T-cell (primary cell): ENCODE measurements at regions of chr12 and their contacts with region 1.

Region 1: GRCh38 chr12:122215771-122216170 is 10.1 kb downstream of the DIABLO start:
- DNase-seq: no peak
- ATAC-seq: no peak
- H3K4me3 ChIP-seq: no peak overlapping the region
- H3K4me3 Mint-ChIP-seq: no peak overlapping the region
- H3K27ac ChIP-seq: no peak overlapping the region
- H3K27ac Mint-ChIP-seq: no peak overlapping the region
- H3K4me1 ChIP-seq: no peaks in the 10 kb centered on the region
- H3K4me1 Mint-ChIP-seq: peaks cover 3 to 6% (median 5%) of the 10 kb centered on the region in 3 donors
- H3K27me3 ChIP-seq: no peaks in the 10 kb centered on the region
- H3K27me3 Mint-ChIP-seq: no peaks in the 10 kb centered on the region

Region 2: DNA sequence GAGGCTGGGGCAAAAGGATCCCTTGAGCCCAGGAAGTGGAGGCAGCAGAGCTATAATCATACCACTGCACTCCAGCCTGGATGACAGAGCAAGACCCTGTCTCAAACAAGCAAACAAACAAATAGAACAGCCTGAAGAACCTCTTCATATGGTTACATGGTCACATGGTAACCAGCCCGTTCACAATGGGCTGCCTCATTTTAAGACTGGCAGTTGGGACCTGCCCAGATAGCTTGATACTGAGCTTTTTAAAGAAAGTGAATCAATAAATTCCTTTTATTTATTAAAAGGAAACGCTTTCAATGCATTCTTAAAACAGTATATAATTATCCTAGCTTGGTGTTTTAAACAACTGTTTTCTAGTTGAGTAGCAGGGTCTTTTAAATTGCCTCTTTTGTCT is 126.7 kb before region 1 on chr12:
- CTCF ChIA-PET with region 1: no interaction called
- POLR2A ChIA-PET with region 1: interaction called in 1 of 2 experiments, 11 read pairs
- DNase-seq: no peak
- ATAC-seq: no peak
- H3K4me3 ChIP-seq: no peak overlapping the region
- H3K4me3 Mint-ChIP-seq: peak overlapping the region in 1 of 3 donors; percentile 86
- H3K27ac ChIP-seq: no peak overlapping the region
- H3K27ac Mint-ChIP-seq: peak overlapping the region; percentile 66 to 94
- H3K4me1 ChIP-seq: peaks cover 71 to 84% of the 10 kb centered on the region in 2 experiments
- H3K4me1 Mint-ChIP-seq: peaks cover 6 to 44% (median 41%) of the 10 kb centered on the region in 3 donors
- H3K27me3 ChIP-seq: no peaks in the 10 kb centered on the region
- H3K27me3 Mint-ChIP-seq: no peaks in the 10 kb centered on the region

Region 3: DNA sequence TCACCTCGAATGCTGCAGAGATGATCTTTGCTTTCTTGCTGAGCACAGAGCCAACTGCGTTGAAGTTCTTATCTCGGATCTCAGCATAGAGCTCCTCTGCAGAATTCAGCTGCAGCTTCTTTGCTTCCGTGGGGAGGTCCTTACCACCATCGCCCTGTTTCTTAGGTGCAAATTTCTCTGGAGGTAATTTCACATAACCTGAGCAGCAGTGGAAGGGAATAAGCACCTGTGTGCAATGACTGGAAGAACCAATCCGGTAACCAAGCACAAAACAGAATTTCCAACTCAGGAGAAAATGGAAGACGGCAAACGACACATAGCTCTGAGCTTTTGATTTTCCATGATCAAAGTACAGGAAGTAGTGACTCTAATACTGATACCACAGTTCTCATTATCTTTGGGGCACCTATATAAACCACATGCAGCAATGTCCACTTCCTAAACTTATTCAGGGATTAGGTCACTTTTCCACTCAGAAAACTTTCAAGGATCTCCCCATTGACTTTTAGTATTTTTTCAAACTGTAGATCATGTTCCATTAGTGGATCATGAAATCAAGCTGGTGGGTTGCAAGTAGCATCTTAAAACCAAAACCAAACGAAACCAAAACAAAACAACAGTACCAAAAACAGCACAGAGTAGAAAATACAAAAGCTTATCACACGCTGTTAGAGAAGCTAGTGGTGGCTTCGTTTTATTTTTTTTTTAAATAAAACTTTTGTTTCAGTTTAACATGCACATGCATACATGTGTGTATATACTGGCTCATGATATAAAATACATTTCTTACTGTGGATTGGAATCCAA is 29.0 kb after region 1 on chr12:
- CTCF ChIA-PET with region 1: interaction called in 1 of 2 experiments, 3 read pairs
- POLR2A ChIA-PET with region 1: interaction called in 1 of 2 experiments, 13 read pairs
- DNase-seq: peak in 16 of 35 experiments; percentile 1 to 60 (median 14)
- ATAC-seq: peak; percentile 79 to 84 (median 83)
- H3K4me3 ChIP-seq: peak overlapping the region in 1 of 2 donors; percentile 49
- H3K4me3 Mint-ChIP-seq: peak overlapping the region; percentile 76 to 85 (median 82)
- H3K27ac ChIP-seq: peak overlapping the region; percentile 72
- H3K27ac Mint-ChIP-seq: peak overlapping the region; percentile 91 to 93
- H3K4me1 ChIP-seq: peaks cover 5 to 26% of the 10 kb centered on the region in 2 experiments
- H3K4me1 Mint-ChIP-seq: peaks cover 17 to 41% (median 34%) of the 10 kb centered on the region in 3 donors
- H3K27me3 ChIP-seq: no peaks in the 10 kb centered on the region
- H3K27me3 Mint-ChIP-seq: no peaks in the 10 kb centered on the region

Region 4: DNA sequence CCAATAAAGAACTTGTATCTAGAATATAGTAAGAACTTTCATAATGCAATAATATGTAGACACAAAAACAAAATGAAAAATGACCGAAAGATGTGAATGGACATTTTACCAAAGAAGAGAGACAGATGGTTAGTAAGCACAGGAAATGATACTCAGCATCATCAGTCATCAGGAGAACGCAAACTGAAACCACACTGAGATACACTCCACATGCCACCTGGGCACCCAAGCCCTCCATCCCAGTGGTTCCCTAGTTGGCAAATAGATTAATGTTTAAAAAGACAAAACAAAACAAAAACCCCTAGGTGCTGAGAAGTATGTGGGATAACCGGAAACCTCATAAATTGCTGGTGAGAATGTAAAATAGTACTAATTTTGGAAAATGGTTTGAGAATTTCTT is 77.3 kb after region 1 on chr12:
- CTCF ChIA-PET with region 1: no interaction called
- POLR2A ChIA-PET with region 1: no interaction called
- DNase-seq: no peak
- ATAC-seq: no peak
- H3K4me3 ChIP-seq: no peak overlapping the region
- H3K4me3 Mint-ChIP-seq: no peak overlapping the region
- H3K27ac ChIP-seq: no peak overlapping the region
- H3K27ac Mint-ChIP-seq: no peak overlapping the region
- H3K4me1 ChIP-seq: no peaks in the 10 kb centered on the region
- H3K4me1 Mint-ChIP-seq: no peaks in the 10 kb centered on the region
- H3K27me3 ChIP-seq: no peaks in the 10 kb centered on the region
- H3K27me3 Mint-ChIP-seq: no peaks in the 10 kb centered on the region

Region 5: DNA sequence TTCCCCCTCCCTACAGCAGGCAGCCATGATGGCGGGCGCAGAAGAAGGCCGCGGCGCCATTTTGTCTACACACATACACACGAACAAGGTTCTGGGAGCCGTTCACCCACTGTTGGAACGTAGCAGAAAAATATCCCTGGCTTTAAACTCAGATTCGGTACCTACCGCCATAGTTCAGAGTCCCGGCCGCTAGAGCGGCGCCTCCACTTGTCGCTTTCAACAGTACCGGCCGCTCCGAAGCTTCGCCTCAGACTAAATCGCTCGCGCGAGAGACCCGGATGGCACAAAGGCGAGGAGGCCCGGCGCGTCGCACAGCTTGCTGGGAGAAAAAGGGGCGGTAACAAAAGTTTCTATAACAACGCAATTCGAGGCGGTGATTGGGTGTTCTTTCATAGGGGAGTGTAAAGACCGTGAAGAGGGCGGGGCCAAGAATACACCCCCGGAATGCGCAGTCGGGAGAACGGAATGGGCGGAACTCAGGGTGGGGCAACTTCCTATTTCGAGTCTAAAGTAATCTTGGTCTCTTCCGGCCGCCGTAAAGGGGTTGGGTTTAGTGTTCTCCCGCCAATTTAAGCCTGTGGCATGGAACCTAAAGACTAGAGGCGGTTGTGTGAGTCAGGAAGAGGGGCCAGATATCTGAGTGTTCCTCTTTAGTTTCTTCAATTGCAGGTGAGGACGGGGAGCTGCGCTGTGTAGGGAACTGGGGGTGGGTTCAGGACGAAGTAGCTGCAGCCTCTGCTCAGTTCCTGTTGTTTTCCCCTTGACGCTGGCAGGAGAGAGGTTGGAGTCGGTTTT is 311.1 kb after region 1 on chr12 and contains the starts of genes KNTC1 and RSRC2:
- CTCF ChIA-PET with region 1: no interaction called
- POLR2A ChIA-PET with region 1: interaction called in 1 of 2 experiments, 10 read pairs
- DNase-seq: peak; percentile 92 to 100 (median 98)
- ATAC-seq: peak; percentile 90 to 96 (median 92)
- H3K4me3 ChIP-seq: peak within 1 kb of the TSS; percentile 88 to 95
- H3K4me3 Mint-ChIP-seq: no peak within 1 kb of the TSS
- H3K27ac ChIP-seq: peak within 1 kb of the TSS; percentile 99
- H3K27ac Mint-ChIP-seq: no peak within 1 kb of the TSS
- H3K4me1 ChIP-seq: peaks cover 17 to 34% of the 10 kb centered on the region in 2 experiments
- H3K4me1 Mint-ChIP-seq: peaks cover 32 to 33% (median 33%) of the 10 kb centered on the region in 3 donors
- H3K27me3 ChIP-seq: no peaks in the 10 kb centered on the region
- H3K27me3 Mint-ChIP-seq: no peaks in the 10 kb centered on the region
- total RNA-seq, gene KNTC1: 26.2 to 35.7 (median 29.2) TPM
- total RNA-seq, gene RSRC2: 92.8 to 237 (median 108) TPM